ENCODE measurements at regions of chr14 and their contacts with region 1.

Region 1: GRCh38 chr14:50667996-50668825 is at the start of gene SAV1:
- DNase-seq: peak; percentile 63 to 85 (median 75)
- H3K4me3 ChIP-seq: peak within 1 kb of the TSS; percentile 37 to 99 (median 88)
- H3K27ac ChIP-seq: peak within 1 kb of the TSS; percentile 78 to 99 (median 94)
- H3K27me3 ChIP-seq: no peaks in the 10 kb centered on the region
- CTCF ChIP-seq: peak in 40 of 56 donors; percentile 3 to 50 (median 20)
- total RNA-seq, gene SAV1: 17.4 to 41.1 (median 25.1) TPM

Region 2: GRCh38 chr14:50559990-50560930 is 108.0 kb before region 1 on chr14 and contains the start of gene ATL1:
- intact Hi-C with region 1: loop called in 1 of 2 experiments (anchors 2 kb)
- DNase-seq: peak; percentile 58 to 87 (median 80)
- H3K4me3 ChIP-seq: peak within 1 kb of the TSS; percentile 54 to 94 (median 83)
- H3K27ac ChIP-seq: peak within 1 kb of the TSS; percentile 81 to 100 (median 98)
- H3K27me3 ChIP-seq: no peaks in the 10 kb centered on the region
- CTCF ChIP-seq: peak in 16 of 56 donors; percentile 2 to 36 (median 12)
- total RNA-seq, gene ATL1: 29.5 to 146 (median 100.0) TPM